Naive thymus-derived CD4-positive, alpha-beta T cell (primary cell): ENCODE measurements at regions of chr1 and their contacts with region 1.

Region 1: GRCh38 chr1:167220537-167221125 is at the start of gene POU2F1:
- DNase-seq: peak; percentile 97 to 99 (median 98)
- ATAC-seq: peak; percentile 91
- H3K4me3 ChIP-seq: peak within 1 kb of the TSS; percentile 90
- H3K4me3 Mint-ChIP-seq: peak within 1 kb of the TSS; percentile 87 to 98 (median 96)
- H3K27ac ChIP-seq: peak within 1 kb of the TSS; percentile 83
- H3K27ac Mint-ChIP-seq: peak within 1 kb of the TSS; percentile 92 to 99 (median 98)
- H3K4me1 ChIP-seq: peaks cover 11 to 20% of the 10 kb centered on the region in 2 donors
- H3K4me1 Mint-ChIP-seq: peaks cover 28 to 48% (median 42%) of the 10 kb centered on the region in 7 donors
- H3K27me3 ChIP-seq: no peaks in the 10 kb centered on the region
- H3K27me3 Mint-ChIP-seq: peaks cover 0 to 3% (median 0%) of the 10 kb centered on the region in 5 donors
- total RNA-seq, gene POU2F1: 20.6 to 36.6 (median 23.3) TPM

Region 2: DNA sequence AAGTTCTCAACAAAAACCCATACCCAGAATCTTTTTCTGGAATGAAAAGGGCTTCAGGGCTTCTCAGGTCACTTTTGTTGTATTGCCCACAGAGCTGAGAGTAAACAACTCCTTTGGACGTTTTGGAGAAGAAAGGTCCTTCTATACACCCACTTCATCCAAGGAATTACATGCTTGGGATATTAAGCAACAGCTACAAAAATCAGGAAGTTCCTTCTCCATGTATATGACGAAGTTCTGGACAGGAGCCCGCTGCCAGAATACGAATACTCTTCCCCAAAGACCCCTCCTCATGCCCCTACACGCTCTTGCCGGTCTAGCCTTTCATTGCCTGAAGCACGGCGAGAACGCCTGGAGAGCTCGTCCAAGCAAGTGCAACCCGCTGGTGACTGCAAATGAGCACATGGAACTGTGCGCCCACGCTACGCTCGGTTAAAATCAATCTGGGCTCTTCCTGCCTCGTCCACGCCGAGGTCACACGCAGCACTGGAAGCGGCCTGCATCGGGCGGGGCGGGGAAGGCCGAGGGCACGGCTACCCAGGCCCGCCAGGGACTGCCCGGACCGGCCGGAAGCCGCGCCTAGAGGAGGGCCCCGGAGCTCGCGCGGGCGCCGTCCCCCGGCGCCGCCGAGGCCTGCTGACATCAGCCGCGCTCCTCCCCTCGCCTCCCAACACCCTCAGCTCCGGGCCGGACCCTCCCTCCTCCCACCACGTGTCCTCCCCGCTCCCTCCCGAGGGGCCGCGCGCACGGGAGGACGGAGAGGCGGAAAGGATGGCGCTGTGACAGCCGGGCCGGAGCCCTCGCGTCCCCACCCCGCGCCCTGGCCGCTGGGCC is 381.6 kb before region 1 on chr1 and contains the start of gene POGK:
- CTCF ChIA-PET with region 1: no interaction called
- POLR2A ChIA-PET with region 1: interaction called, 8 read pairs
- intact Hi-C with region 1: loop called (anchors 1 kb)
- DNase-seq: peak; percentile 70 to 89 (median 77)
- ATAC-seq: peak; percentile 95
- H3K4me3 ChIP-seq: peak within 1 kb of the TSS; percentile 60
- H3K4me3 Mint-ChIP-seq: peak within 1 kb of the TSS; percentile 89 to 97 (median 92)
- H3K27ac ChIP-seq: peak within 1 kb of the TSS; percentile 90
- H3K27ac Mint-ChIP-seq: peak within 1 kb of the TSS; percentile 91 to 100 (median 94)
- H3K4me1 ChIP-seq: peaks cover 13 to 21% of the 10 kb centered on the region in 2 donors
- H3K4me1 Mint-ChIP-seq: peaks cover 23 to 55% (median 48%) of the 10 kb centered on the region in 7 donors
- H3K27me3 ChIP-seq: no peaks in the 10 kb centered on the region
- H3K27me3 Mint-ChIP-seq: no peaks in the 10 kb centered on the region
- total RNA-seq, gene POGK: 24.7 to 38.7 (median 36.9) TPM

Region 3: DNA sequence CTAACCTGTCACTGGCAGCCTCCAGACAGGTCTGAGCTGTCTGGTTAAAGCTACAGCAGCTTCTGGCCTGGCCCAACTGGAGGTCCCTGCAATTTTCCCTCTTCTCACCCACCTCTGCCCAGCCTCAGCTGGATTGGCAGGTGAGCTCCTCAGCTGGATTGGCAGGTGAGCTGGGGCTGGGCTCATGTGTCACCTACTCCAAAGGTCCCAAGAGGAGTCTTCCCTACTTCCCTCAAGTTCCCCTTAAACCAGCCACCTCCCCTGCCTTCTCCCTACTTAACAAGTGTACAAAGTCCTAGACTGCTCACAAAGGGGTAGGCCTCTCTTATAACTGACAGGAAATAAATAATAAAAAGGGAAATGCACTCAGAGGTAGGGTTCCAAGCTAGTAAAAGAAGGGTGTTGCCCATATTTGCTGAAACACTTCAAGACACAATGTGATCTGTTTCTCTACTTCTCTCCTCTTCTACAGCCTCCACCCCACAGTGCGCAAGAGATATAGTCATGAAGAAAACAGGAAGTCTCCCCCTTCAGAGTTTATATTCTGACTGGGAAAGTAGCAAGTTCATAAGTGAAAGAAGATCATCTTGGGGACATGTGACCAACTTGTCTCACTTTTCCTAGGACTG is 130.2 kb before region 1 on chr1 and contains the start of gene GPA33:
- CTCF ChIA-PET with region 1: interaction called, 6 read pairs
- POLR2A ChIA-PET with region 1: interaction called, 8 read pairs
- intact Hi-C with region 1: loop called (anchors 1 kb)
- DNase-seq: peak in 7 of 9 donors; percentile 71 to 89 (median 83)
- ATAC-seq: peak; percentile 95
- H3K4me3 ChIP-seq: peak within 1 kb of the TSS; percentile 45
- H3K4me3 Mint-ChIP-seq: peak within 1 kb of the TSS in 9 of 10 donors; percentile 63 to 93 (median 86)
- H3K27ac ChIP-seq: peak within 1 kb of the TSS; percentile 83
- H3K27ac Mint-ChIP-seq: peak within 1 kb of the TSS; percentile 95 to 100 (median 100)
- H3K4me1 ChIP-seq: peaks cover 25 to 33% of the 10 kb centered on the region in 2 donors
- H3K4me1 Mint-ChIP-seq: peaks cover 18 to 80% (median 34%) of the 10 kb centered on the region in 7 donors
- H3K27me3 ChIP-seq: no peaks in the 10 kb centered on the region
- H3K27me3 Mint-ChIP-seq: no peaks in the 10 kb centered on the region
- total RNA-seq, gene GPA33: 5.4 to 32.6 (median 11.3) TPM

Region 4: GRCh38 chr1:167447521-167448136 is 227.0 kb after region 1 on chr1:
- CTCF ChIA-PET with region 1: interaction called, 7 read pairs
- POLR2A ChIA-PET with region 1: interaction called, 5 read pairs
- intact Hi-C with region 1: loop called in 1 of 2 experiments (anchors 2 kb)
- DNase-seq: peak; percentile 42 to 91 (median 83)
- ATAC-seq: peak; percentile 88
- H3K4me3 ChIP-seq: peak overlapping the region; percentile 38
- H3K4me3 Mint-ChIP-seq: peak overlapping the region; percentile 72 to 90 (median 82)
- H3K27ac ChIP-seq: peak overlapping the region; percentile 89
- H3K27ac Mint-ChIP-seq: peak overlapping the region; percentile 90 to 99 (median 97)
- H3K4me1 ChIP-seq: peaks cover 71 to 83% of the 10 kb centered on the region in 2 donors
- H3K4me1 Mint-ChIP-seq: peaks cover 56 to 97% (median 82%) of the 10 kb centered on the region in 7 donors
- H3K27me3 ChIP-seq: no peaks in the 10 kb centered on the region
- H3K27me3 Mint-ChIP-seq: no peaks in the 10 kb centered on the region

Region 5: DNA sequence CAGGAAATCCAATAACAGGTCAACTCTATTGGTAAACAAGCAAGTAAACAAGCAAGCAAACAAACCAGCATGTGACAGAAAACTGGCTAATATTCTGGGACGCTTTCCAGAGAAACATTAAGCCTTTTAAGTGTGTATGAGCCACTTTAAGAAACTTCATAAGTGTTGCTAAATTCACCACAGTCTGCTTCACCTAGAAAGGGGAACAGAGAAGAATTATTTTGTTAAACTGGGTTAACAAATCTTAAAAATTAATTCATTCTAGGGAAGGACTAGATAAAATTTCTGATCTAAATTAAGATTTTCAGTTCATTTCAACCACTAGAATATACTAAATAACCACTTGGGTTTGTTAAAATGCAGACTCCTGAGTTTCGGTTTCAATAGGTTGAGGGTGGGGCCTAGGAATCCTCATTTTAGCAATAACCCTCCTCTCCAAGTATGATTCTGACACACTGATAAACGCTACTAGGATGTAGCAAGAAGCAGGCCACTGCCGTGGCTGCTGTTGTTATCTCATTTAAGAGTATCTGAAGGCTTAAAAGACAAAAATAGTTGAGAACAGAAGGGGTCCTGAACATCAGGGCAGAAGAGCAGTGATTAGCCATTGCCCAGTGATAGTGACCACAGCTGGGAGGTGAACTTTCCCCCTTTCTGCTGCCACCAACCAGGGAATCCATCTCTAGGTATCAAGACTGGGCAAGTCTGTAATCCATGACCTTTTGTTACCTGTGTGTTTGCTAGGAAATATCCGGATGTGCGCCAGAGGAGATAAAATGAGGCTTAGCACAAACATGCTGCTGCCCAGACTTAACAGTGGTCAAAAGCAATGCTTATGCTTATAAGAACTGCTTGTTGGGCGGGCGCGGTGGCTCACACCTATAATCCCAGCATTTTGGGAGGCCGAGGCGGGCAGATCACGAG is 321.7 kb after region 1 on chr1:
- CTCF ChIA-PET with region 1: interaction called, 5 read pairs
- POLR2A ChIA-PET with region 1: no interaction called
- intact Hi-C with region 1: loop called in 1 of 2 experiments (anchors 5 kb)
- DNase-seq: no peak
- ATAC-seq: no peak
- H3K4me3 ChIP-seq: no peak overlapping the region
- H3K4me3 Mint-ChIP-seq: peak overlapping the region in 1 of 10 donors; percentile 15
- H3K27ac ChIP-seq: no peak overlapping the region
- H3K27ac Mint-ChIP-seq: peak overlapping the region in 2 of 9 donors; percentile 33 to 68
- H3K4me1 ChIP-seq: no peaks in the 10 kb centered on the region
- H3K4me1 Mint-ChIP-seq: peaks cover 3 to 56% (median 5%) of the 10 kb centered on the region in 7 donors
- H3K27me3 ChIP-seq: no peaks in the 10 kb centered on the region
- H3K27me3 Mint-ChIP-seq: no peaks in the 10 kb centered on the region

Region 6: GRCh38 chr1:167936068-167936929 is 715.7 kb after region 1 on chr1 and contains the start of gene DCAF6:
- CTCF ChIA-PET with region 1: no interaction called
- POLR2A ChIA-PET with region 1: interaction called, 6 read pairs
- intact Hi-C with region 1: loop called in 1 of 2 experiments (anchors 1 kb)
- DNase-seq: peak; percentile 94 to 99 (median 99)
- ATAC-seq: peak; percentile 89
- H3K4me3 ChIP-seq: peak within 1 kb of the TSS; percentile 89
- H3K4me3 Mint-ChIP-seq: peak within 1 kb of the TSS; percentile 90 to 99 (median 96)
- H3K27ac ChIP-seq: peak within 1 kb of the TSS; percentile 89
- H3K27ac Mint-ChIP-seq: peak within 1 kb of the TSS; percentile 90 to 100 (median 99)
- H3K4me1 ChIP-seq: peaks cover 18 to 31% of the 10 kb centered on the region in 2 donors
- H3K4me1 Mint-ChIP-seq: peaks cover 29 to 58% (median 40%) of the 10 kb centered on the region in 7 donors
- H3K27me3 ChIP-seq: no peaks in the 10 kb centered on the region
- H3K27me3 Mint-ChIP-seq: no peaks in the 10 kb centered on the region
- total RNA-seq, gene DCAF6: 27.4 to 32.7 (median 29.1) TPM